ENCODE measurements at regions of chr6 and their contacts with region 1.

Region 1: DNA sequence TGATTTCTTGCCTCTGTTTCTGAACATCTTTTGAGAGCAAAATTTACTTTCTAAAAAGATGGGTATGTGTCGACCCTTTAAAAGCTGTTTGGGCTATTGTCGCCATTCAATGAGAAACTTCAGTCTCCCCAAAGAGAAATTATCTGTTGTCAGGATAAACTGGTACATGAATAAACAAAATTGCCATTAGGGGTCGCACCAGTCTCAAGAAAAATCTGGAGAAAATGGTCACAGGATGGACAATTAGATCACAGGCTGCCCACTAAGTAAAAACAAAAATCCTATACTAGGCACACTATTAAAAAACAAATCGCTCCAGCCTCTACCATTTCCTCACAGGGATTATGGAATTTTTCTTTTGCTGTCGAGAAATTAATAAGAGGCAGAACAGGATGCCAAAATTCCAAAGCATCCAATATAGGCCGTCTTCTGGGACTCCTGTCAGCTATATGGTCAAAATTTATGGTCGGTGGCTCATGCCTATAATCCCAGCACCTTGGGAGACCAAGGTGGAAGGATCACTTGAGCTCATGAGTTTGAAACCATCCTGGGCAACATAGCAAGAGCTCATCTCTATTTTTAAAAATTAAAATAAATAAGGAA is 5.5 kb upstream of the HLA-E start:
- DNase-seq: peak in 1 of 5 donors; percentile 47
- ATAC-seq: peak in 1 of 4 donors; percentile 55
- H3K4me3 ChIP-seq: no peak overlapping the region
- H3K27ac ChIP-seq: no peak overlapping the region
- H3K4me1 ChIP-seq: peaks cover 0 to 21% (median 4%) of the 10 kb centered on the region in 12 donors
- H3K27me3 ChIP-seq: peaks cover 4 to 40% (median 30%) of the 10 kb centered on the region in 9 donors
- CTCF ChIP-seq: peak; percentile 35 to 69 (median 55)
- POLR2A ChIP-seq: no peak

Region 2: GRCh38 chr6:30533460-30534294 is 49.9 kb after region 1 on chr6:
- intact Hi-C with region 1: loop called in 3 of 10 experiments (anchors 2 kb)
- DNase-seq: no peak
- ATAC-seq: no peak
- H3K4me3 ChIP-seq: peak overlapping the region in 1 of 12 donors; percentile 16
- H3K27ac ChIP-seq: peak overlapping the region in 6 of 12 donors; percentile 0 to 69 (median 57)
- H3K4me1 ChIP-seq: peaks cover 0 to 35% (median 0%) of the 10 kb centered on the region in 12 donors
- H3K27me3 ChIP-seq: no peaks in the 10 kb centered on the region
- CTCF ChIP-seq: no peak
- POLR2A ChIP-seq: no peak

Region 3: DNA sequence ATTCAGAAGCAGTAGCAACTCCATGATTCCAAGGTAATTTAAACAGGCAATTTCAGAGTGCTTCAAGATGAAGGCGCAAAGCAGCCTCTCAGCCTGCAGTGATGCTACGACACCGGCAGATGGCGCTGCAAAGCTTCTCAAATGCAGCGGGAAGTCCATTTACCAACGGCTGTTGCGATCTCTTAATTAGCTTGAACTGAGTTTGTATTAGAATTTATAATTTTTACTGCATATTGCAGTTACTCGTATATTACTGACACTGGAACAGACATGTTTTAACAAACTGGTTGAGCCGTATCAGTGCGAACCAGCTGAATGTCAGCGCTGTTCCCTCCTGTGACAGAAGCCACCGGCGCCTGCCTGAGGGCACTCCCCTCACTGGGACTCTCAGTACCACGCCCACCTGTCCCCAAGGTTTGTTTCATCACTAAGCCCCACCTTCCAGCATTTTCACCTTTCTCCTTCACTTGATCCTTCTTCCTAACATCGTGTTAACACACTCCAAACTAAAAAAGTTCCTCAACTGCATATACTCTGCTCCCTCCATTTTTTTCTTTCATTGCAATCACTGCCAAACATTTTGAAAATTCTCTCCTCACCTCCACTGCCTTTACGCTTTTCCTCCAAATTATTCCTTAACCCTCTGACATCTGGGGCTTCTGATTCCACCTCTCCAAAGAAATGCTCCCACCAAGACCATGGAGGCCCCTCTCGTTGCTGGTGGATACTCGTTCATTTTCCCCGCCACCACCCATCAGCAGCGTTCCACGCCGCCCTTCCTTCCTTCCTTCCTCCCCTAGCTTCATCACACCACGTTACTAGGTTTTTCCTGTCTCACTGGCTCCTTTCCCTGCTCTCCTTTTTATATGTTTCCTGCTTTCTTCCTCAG is 58.0 kb after region 1 on chr6:
- intact Hi-C with region 1: loop called in 9 of 10 experiments (anchors 1 to 5 kb)
- DNase-seq: peak; percentile 69 to 86 (median 77)
- ATAC-seq: peak; percentile 63 to 82 (median 72)
- H3K4me3 ChIP-seq: peak overlapping the region in 11 of 12 donors; percentile 22 to 54 (median 44)
- H3K27ac ChIP-seq: peak overlapping the region; percentile 1 to 80 (median 63)
- H3K4me1 ChIP-seq: peaks cover 0 to 32% (median 9%) of the 10 kb centered on the region in 12 donors
- H3K27me3 ChIP-seq: no peaks in the 10 kb centered on the region
- CTCF ChIP-seq: peak; percentile 94 to 100 (median 99)
- POLR2A ChIP-seq: no peak

Region 4: DNA sequence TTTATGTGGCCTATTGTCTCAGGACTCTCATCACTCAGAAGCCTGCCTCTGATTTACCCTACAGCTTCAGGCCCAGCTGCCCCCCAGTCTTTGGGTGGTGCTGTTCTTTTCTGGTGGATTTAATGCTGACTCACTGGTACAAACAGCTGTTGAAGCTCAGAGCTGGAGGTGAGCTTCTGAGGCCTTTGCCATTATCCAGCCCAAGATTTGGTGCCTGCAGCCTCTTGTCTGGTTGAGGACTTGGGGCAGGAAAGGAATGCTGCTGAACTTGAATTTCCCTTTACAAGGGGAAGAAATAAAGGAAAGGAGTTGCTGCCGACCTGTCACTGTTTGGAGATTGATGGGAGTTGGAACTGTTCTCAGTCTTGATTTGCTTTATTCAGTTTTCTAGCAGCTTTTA is 107.2 kb after region 1 on chr6:
- intact Hi-C with region 1: loop called in 8 of 10 experiments (anchors 2 to 5 kb)
- DNase-seq: no peak
- ATAC-seq: peak in 1 of 4 donors; percentile 25
- H3K4me3 ChIP-seq: no peak overlapping the region
- H3K27ac ChIP-seq: peak overlapping the region in 2 of 12 donors; percentile 25 to 36
- H3K4me1 ChIP-seq: no peaks in the 10 kb centered on the region
- H3K27me3 ChIP-seq: no peaks in the 10 kb centered on the region
- CTCF ChIP-seq: no peak
- POLR2A ChIP-seq: no peak

Region 5: DNA sequence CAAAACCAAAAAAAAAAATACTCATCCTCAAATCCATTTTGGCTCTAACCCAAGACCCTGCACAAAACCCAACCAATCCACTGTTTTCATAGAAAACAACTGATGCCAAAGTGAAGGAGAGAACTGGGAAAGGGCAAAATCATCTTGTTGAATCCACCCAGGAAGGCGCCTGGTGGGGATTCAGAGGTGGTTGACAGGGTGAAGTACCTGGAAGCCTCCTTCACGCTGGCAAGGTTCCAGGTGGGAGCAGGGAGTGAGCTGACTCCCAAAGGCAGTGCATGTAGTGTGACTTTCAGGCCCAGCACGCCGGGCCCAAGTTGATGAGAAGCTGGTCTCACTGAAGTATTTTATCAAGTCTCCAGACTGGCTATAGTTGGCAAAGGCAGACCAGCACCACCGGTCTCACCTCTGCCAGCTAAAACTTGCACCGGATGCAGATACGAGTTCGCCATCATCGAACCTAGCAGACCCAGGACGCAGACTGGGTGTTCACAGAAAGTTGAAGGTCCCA is 116.7 kb after region 1 on chr6:
- intact Hi-C with region 1: loop called in 9 of 10 experiments (anchors 2 to 5 kb)
- DNase-seq: peak in 2 of 5 donors; percentile 33 to 54
- ATAC-seq: peak in 3 of 4 donors; percentile 3 to 5 (median 4)
- H3K4me3 ChIP-seq: no peak overlapping the region
- H3K27ac ChIP-seq: no peak overlapping the region
- H3K4me1 ChIP-seq: peaks cover 0 to 11% (median 0%) of the 10 kb centered on the region in 12 donors
- H3K27me3 ChIP-seq: no peaks in the 10 kb centered on the region
- CTCF ChIP-seq: no peak
- POLR2A ChIP-seq: no peak

Region 6: DNA sequence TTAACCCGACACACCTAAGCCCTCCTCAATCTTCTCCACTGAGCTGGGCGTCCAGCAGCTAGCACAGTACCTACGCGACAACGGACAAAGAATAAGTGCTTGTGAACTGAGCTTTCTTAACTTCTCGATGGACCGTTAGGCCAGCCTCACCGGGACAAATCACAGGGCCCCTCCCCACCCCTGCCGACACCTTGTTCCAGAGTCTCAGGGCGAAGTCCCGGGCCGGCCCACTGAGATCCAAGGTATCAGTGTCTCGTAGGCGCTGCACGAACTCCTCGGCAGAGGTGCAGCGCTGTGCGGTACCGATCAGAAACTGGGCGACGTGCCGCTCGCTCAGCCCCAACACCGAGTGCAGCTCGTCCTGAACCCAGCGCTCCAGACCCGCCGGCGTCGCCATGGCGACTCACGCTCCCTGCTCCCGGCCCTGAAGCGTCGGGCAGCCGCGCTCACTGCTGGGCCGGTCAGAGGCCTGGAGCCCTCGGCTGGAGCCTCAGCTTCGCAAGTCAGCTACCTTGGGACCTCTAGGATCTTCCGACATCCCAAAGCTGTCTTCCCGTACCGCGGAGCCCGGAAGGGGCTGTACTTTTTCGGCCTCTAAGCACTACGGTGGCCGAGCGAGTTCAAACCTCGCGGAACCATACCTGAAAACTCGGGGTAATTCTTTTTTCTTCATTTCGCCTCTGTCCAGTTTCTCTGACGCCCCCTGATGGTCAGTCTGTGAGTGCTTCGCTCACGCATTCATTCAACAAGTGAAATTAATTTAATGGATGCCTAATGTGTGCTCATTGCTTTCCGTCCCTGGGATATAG is 188.9 kb after region 1 on chr6 and contains the start of gene DHX16:
- intact Hi-C with region 1: loop called in 8 of 10 experiments (anchors 5 to 10 kb)
- DNase-seq: peak; percentile 97 to 98 (median 97)
- ATAC-seq: peak; percentile 64 to 93 (median 91)
- H3K4me3 ChIP-seq: peak within 1 kb of the TSS; percentile 76 to 98 (median 94)
- H3K27ac ChIP-seq: peak within 1 kb of the TSS in 11 of 12 donors; percentile 66 to 85 (median 79)
- H3K4me1 ChIP-seq: peaks cover 0 to 24% (median 15%) of the 10 kb centered on the region in 12 donors
- H3K27me3 ChIP-seq: no peaks in the 10 kb centered on the region
- CTCF ChIP-seq: peak; percentile 77 to 97 (median 85)
- POLR2A ChIP-seq: peak in 1 of 2 donors; percentile 48
- total RNA-seq, gene DHX16: 17.6 to 26.1 (median 21.0) TPM

Region 7: GRCh38 chr6:30730601-30731435 is 247.0 kb after region 1 on chr6:
- intact Hi-C with region 1: loop called in 2 of 10 experiments (anchors 5 to 10 kb)
- DNase-seq: peak; percentile 65 to 82 (median 71)
- ATAC-seq: peak; percentile 58 to 85 (median 75)
- H3K4me3 ChIP-seq: peak overlapping the region in 1 of 12 donors; percentile 30
- H3K27ac ChIP-seq: peak overlapping the region in 5 of 12 donors; percentile 15 to 64 (median 29)
- H3K4me1 ChIP-seq: peaks cover 0 to 25% (median 12%) of the 10 kb centered on the region in 12 donors
- H3K27me3 ChIP-seq: no peaks in the 10 kb centered on the region
- CTCF ChIP-seq: peak; percentile 50 to 75 (median 60)
- POLR2A ChIP-seq: no peak

Measured in heart left ventricle (tissue), 16 donors.